Motor neuron (in vitro differentiated cells): ENCODE measurements at regions of chr3 and their contacts with region 1.

Region 1: GRCh38 chr3:159130108-159130507 is 328.3 kb downstream of the MFSD1 start:
- ATAC-seq: peak in 1 of 8 experiments; percentile 37
- H3K4me3 ChIP-seq: no peak overlapping the region
- H3K27ac ChIP-seq: no peak overlapping the region
- H3K4me1 ChIP-seq: peaks cover 6 to 74% of the 10 kb centered on the region in 2 donors

Region 2: DNA sequence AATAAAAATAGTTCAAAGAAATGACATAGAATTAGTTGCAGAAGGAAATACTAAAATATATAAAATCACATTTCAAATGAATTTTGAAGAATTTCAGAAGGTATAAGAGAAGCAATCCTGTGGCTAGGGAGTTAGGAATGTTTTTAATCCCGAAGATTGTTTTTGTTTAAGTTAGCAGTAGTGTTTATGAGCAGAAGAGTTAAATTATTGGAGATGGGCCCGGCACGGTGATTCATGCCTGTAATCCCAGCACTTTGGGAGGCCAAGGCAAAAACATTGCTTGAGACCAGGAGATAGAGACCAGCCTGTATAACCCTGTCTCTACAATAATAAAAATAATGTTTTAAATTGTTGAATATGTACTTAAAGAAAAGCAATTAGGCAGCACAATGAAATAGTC is 104.2 kb after region 1 on chr3:
- in situ Hi-C with region 1: loop called in 1 of 9 experiments (anchors 25 kb)
- ATAC-seq: peak in 2 of 8 experiments; percentile 19 to 36
- H3K4me3 ChIP-seq: no peak overlapping the region
- H3K27ac ChIP-seq: peak overlapping the region in 1 of 2 donors; percentile 73
- H3K4me1 ChIP-seq: peaks cover 49 to 56% of the 10 kb centered on the region in 2 donors

Region 3: GRCh38 chr3:159245871-159246270 is 115.8 kb after region 1 on chr3:
- in situ Hi-C with region 1: loop called in 2 of 9 experiments (anchors 10 to 25 kb)
- ATAC-seq: no peak
- H3K4me3 ChIP-seq: no peak overlapping the region
- H3K27ac ChIP-seq: no peak overlapping the region
- H3K4me1 ChIP-seq: peaks cover 9 to 31% of the 10 kb centered on the region in 2 donors